Activated CD4-positive, alpha-beta memory T cell treated with anti-CD3 and anti-CD28 coated beads, Interleukin-2, amount 10 ng/mL, durations not matched to agents 7 days and 5 days (primary cell): ENCODE measurements at regions of chr10 and their contacts with region 1.

Region 1: GRCh38 chr10:60237977-60238758 is 151.5 kb downstream of the ANK3 start:
- DNase-seq: no peak
- H3K4me3 Mint-ChIP-seq: peak overlapping the region; percentile 51
- H3K27ac Mint-ChIP-seq: peak overlapping the region; percentile 53
- H3K4me1 Mint-ChIP-seq: peaks cover 29% of the 10 kb centered on the region
- H3K27me3 Mint-ChIP-seq: no peaks in the 10 kb centered on the region

Region 2: GRCh38 chr10:60434418-60435046 is 196.4 kb after region 1 on chr10:
- CTCF ChIA-PET with region 1: interaction called, 23 read pairs
- POLR2A ChIA-PET with region 1: no interaction called
- DNase-seq: no peak
- H3K4me3 Mint-ChIP-seq: no peak overlapping the region
- H3K27ac Mint-ChIP-seq: no peak overlapping the region
- H3K4me1 Mint-ChIP-seq: no peaks in the 10 kb centered on the region
- H3K27me3 Mint-ChIP-seq: no peaks in the 10 kb centered on the region

Region 3: GRCh38 chr10:60646966-60647796 is 409.0 kb after region 1 on chr10:
- CTCF ChIA-PET with region 1: interaction called, 11 read pairs
- POLR2A ChIA-PET with region 1: no interaction called
- DNase-seq: peak; percentile 38
- H3K4me3 Mint-ChIP-seq: no peak overlapping the region
- H3K27ac Mint-ChIP-seq: no peak overlapping the region
- H3K4me1 Mint-ChIP-seq: peaks cover 6% of the 10 kb centered on the region
- H3K27me3 Mint-ChIP-seq: no peaks in the 10 kb centered on the region